ENCODE measurements at regions of chr11 and their contacts with region 1.

Region 1: GRCh38 chr11:44621140-44621681 is 55.7 kb downstream of the CD82 start:
- DNase-seq: peak; percentile 59 to 74 (median 71)
- H3K4me3 ChIP-seq: no peak overlapping the region
- H3K27ac ChIP-seq: no peak overlapping the region
- H3K4me1 ChIP-seq: peaks cover 6 to 26% (median 22%) of the 10 kb centered on the region in 4 experiments
- H3K27me3 ChIP-seq: no peaks in the 10 kb centered on the region

Region 2: DNA sequence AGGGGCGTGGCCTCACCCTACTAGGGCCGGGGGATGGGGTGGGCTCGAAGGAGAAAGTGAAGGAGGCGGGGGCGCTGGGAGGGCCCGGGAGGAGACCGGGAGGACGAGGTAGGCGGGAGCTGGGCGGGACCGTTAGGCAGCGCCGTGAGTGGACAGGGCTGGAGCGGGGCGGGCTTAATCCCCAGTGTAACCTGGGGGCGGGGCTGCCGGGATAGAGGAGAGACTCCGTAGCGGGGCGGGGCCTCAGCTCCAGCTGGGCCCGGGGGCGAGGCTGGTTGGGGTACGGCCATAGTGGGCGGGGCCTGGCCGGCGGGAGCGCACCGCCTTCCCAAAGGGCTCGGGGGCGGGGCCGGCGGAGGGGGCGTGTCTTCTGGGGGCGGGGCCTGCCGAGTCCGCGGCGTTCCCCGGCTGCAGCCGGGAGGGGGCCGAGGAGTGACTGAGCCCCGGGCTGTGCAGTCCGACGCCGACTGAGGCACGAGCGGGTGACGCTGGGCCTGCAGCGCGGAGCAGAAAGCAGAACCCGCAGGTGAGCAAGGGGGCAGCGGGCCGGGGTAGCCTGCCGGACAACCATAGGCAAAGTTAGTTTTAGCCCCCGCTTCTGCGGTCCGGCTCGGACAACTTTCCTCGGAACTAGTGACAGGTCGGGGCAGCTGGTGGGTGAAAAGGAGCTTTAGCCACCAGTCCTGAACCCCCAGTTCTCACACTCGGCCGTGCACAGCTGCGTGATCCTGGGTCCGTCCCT is 55.8 kb before region 1 on chr11 and contains the start of gene CD82:
- CTCF ChIA-PET with region 1: interaction called, 504 read pairs
- POLR2A ChIA-PET with region 1: interaction called, 3 read pairs
- DNase-seq: peak; percentile 96 to 98 (median 97)
- H3K4me3 ChIP-seq: peak within 1 kb of the TSS; percentile 83 to 99 (median 96)
- H3K27ac ChIP-seq: peak within 1 kb of the TSS; percentile 73 to 79
- H3K4me1 ChIP-seq: peaks cover 28 to 69% (median 61%) of the 10 kb centered on the region in 4 experiments
- H3K27me3 ChIP-seq: no peaks in the 10 kb centered on the region

Region 3: GRCh38 chr11:44775366-44775984 is 154.3 kb after region 1 on chr11:
- CTCF ChIA-PET with region 1: interaction called, 14 read pairs
- POLR2A ChIA-PET with region 1: no interaction called
- DNase-seq: peak; percentile 64 to 74 (median 67)
- H3K4me3 ChIP-seq: no peak overlapping the region
- H3K27ac ChIP-seq: no peak overlapping the region
- H3K4me1 ChIP-seq: no peaks in the 10 kb centered on the region
- H3K27me3 ChIP-seq: peaks cover 0 to 8% (median 0%) of the 10 kb centered on the region in 5 experiments

Region 4: GRCh38 chr11:44911029-44911814 is 290.0 kb after region 1 on chr11:
- CTCF ChIA-PET with region 1: interaction called, 12 read pairs
- POLR2A ChIA-PET with region 1: no interaction called
- DNase-seq: peak; percentile 83 to 91 (median 85)
- H3K4me3 ChIP-seq: no peak overlapping the region
- H3K27ac ChIP-seq: no peak overlapping the region
- H3K4me1 ChIP-seq: peaks cover 0 to 30% (median 21%) of the 10 kb centered on the region in 4 experiments
- H3K27me3 ChIP-seq: peaks cover 0 to 3% (median 0%) of the 10 kb centered on the region in 5 experiments

Measured in common myeloid progenitor, CD34-positive (primary cell).